ENCODE measurements at regions of chr2 and their contacts with region 1.

Region 1: GRCh38 chr2:223797811-223798721 is 39.3 kb downstream of the AP1S3 start:
- DNase-seq: peak; percentile 56
- H3K4me3 ChIP-seq: no peak overlapping the region
- H3K27ac ChIP-seq: peak overlapping the region; percentile 95
- H3K4me1 ChIP-seq: peaks cover 44% of the 10 kb centered on the region
- H3K27me3 ChIP-seq: no peaks in the 10 kb centered on the region
- CTCF ChIP-seq: peak; percentile 64

Region 2: GRCh38 chr2:222969491-222969890 is 828.6 kb before region 1 on chr2:
- CTCF ChIA-PET with region 1: interaction called, 6 read pairs
- dilution Hi-C with region 1: no loop called
- in situ Hi-C with region 1: loop called in 1 of 2 experiments (anchors 10 kb)
- intact Hi-C with region 1: loop called (anchors 1 kb)
- DNase-seq: no peak
- H3K4me3 ChIP-seq: no peak overlapping the region
- H3K27ac ChIP-seq: no peak overlapping the region
- H3K4me1 ChIP-seq: peaks cover 24% of the 10 kb centered on the region
- H3K27me3 ChIP-seq: no peaks in the 10 kb centered on the region
- CTCF ChIP-seq: no peak

Region 3: GRCh38 chr2:223262946-223263345 is 535.1 kb before region 1 on chr2:
- CTCF ChIA-PET with region 1: no interaction called
- dilution Hi-C with region 1: no loop called
- in situ Hi-C with region 1: no loop called
- intact Hi-C with region 1: loop called (anchors 5 kb)
- DNase-seq: peak; percentile 88
- H3K4me3 ChIP-seq: no peak overlapping the region
- H3K27ac ChIP-seq: peak overlapping the region; percentile 73
- H3K4me1 ChIP-seq: peaks cover 32% of the 10 kb centered on the region
- H3K27me3 ChIP-seq: no peaks in the 10 kb centered on the region
- CTCF ChIP-seq: no peak

Region 4: DNA sequence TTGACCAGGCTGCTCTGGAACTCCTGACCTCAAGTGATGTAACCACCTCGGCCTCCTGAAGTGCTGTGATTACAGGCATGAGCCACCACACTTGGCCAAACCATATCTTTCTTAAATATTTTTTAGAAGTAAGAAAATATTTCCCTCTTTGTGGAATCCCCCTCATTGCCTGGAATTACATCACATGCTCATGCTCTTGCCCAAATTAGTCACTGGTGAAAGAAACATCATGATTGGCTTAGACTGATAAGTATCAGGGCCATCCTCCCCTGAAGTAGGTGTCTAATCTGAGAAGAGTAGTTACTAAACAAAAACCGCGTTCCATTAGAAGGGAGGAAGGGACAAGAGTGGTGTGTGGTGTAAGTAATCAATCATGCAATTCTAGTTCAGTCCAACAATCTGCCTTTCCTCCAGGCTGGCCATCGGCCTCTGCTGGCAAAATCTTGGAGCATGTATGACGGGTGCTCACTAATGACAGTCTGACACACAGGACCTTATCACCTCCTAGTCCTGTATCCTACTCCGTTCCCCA is 143.6 kb before region 1 on chr2:
- CTCF ChIA-PET with region 1: interaction called, 10 read pairs
- dilution Hi-C with region 1: no loop called
- in situ Hi-C with region 1: no loop called
- intact Hi-C with region 1: no loop called
- DNase-seq: no peak
- H3K4me3 ChIP-seq: no peak overlapping the region
- H3K27ac ChIP-seq: no peak overlapping the region
- H3K4me1 ChIP-seq: no peaks in the 10 kb centered on the region
- H3K27me3 ChIP-seq: no peaks in the 10 kb centered on the region
- CTCF ChIP-seq: no peak

Region 5: DNA sequence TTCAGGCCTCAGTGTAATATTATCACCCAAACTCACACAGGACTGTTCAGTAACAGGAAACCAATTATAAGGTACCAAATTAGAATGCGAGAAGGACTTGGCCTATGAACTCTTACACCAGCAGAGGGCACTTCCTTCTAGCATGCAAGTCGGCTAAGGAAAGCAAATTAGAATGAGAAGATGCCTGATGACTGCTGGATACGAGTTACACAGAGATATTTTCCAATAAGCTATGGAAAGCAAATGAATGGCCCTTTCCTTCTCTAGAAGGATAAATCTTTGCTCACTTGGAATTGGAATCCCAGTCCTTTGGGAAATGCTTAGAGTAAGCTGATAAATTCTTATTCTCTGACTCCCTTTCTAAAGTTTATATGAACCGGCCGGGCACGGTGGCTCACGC is 70.5 kb before region 1 on chr2:
- CTCF ChIA-PET with region 1: no interaction called
- dilution Hi-C with region 1: no loop called
- in situ Hi-C with region 1: no loop called
- intact Hi-C with region 1: loop called (anchors 1 kb)
- DNase-seq: peak; percentile 62
- H3K4me3 ChIP-seq: no peak overlapping the region
- H3K27ac ChIP-seq: no peak overlapping the region
- H3K4me1 ChIP-seq: peaks cover 21% of the 10 kb centered on the region
- H3K27me3 ChIP-seq: no peaks in the 10 kb centered on the region
- CTCF ChIP-seq: peak; percentile 57 to 80

Region 6: DNA sequence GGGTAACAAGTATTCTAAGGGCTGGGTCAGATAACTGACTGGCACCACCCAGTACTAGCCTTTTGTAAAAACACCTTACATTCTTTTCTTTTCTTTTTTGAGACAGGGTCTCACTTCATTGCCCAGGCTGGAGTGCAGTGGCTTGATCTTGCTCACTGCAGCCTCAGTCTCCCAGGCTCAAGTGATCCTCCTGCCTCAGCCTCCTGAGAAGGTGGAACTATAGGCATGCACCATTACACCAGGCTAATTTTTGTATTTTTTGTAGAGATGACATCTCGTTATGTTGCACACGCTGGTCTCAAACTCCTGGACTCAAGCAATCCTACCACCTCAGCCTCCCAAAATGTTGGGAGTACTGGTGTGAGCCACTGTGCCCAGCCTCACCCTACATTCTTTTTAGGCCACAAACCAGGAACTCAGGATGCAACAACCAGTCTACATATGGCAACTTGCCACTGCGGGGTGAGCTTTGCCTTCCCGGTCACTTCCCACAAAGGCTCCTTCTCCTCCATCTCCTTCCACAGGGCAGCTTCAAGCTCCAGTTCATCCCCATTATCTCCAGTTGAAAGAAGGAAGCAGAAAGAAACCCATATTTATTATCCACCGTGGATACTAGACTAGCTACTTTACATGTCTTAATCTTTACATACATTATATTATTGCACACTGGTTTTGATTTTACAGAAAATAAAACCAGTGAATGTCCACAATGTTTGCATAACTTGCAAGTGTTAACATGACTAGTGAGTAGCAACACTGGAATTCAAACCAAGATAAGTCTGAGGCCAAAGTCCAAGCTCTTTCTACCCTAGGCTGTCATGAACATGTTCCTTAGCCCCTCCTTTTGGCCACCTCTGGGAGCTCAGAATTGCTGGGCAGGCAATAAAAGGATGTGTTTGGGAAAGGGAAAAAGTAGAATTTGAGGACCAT is 63.0 kb after region 1 on chr2:
- CTCF ChIA-PET with region 1: interaction called, 3 read pairs
- dilution Hi-C with region 1: no loop called
- in situ Hi-C with region 1: no loop called
- intact Hi-C with region 1: loop called (anchors 1 kb)
- DNase-seq: peak; percentile 94
- H3K4me3 ChIP-seq: peak overlapping the region in 2 of 3 experiments; percentile 20 to 26
- H3K27ac ChIP-seq: peak overlapping the region; percentile 89
- H3K4me1 ChIP-seq: peaks cover 19% of the 10 kb centered on the region
- H3K27me3 ChIP-seq: no peaks in the 10 kb centered on the region
- CTCF ChIP-seq: peak; percentile 9 to 50

Measured in mammary epithelial cell (primary cell).